ENCODE measurements at regions of chr5 and their contacts with region 1.

Region 1: DNA sequence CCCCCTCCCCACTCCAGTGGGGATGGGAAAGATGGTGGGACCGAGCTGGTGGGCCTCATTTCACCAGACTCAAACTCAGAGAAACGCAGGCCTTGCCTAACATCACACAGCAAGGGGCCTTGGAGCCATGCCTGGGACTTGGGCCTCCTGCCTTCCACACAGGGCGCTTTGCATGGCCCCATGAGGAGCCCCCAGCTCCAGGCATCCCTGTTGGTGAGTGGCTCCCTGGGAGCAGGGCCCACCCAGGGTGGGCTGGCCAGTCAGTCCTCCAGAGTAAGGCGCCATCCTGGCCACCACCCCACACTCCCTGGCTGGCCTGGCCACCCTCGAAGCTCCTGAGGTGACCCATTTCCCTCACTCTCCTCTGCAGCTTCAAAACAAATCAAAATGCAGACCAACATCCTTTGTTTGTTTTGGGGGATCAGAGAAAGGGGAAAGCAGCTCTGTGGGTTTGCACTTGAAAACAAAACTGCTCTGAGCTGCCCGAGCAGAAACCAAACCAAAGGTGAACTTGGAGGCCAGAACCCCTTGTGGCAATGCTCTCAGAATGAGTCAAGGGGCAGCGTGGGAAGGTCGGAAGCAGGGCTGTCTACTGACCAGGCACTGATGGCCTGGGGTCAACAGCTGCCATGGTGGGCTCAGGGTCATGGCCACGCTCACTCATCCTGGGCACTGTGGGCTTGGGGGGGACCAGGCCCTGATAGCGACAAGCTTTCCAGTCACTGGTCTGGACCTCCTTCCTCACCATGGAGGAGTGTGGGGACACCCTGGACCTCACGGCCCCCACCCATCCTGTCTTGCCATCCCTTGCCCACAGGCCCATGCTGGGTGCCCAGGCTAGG is 37.0 kb upstream of the VDAC1 start:
- DNase-seq: no peak
- ATAC-seq: no peak; the same call in 2 of the 3 replicates
- H3K4me3 ChIP-seq: peak overlapping the region in 1 of 3 experiments; percentile 14; a peak in 1 of 6 replicates
- H3K27ac ChIP-seq: no peak overlapping the region
- H3K4me1 ChIP-seq: peaks cover 62% of the 10 kb centered on the region
- H3K27me3 ChIP-seq: no peaks in the 10 kb centered on the region
- CTCF ChIP-seq: no peak
- EP300 ChIP-seq: no peak
- POLR2A ChIP-seq: no peak
- RAD21 ChIP-seq: no peak

Region 2: DNA sequence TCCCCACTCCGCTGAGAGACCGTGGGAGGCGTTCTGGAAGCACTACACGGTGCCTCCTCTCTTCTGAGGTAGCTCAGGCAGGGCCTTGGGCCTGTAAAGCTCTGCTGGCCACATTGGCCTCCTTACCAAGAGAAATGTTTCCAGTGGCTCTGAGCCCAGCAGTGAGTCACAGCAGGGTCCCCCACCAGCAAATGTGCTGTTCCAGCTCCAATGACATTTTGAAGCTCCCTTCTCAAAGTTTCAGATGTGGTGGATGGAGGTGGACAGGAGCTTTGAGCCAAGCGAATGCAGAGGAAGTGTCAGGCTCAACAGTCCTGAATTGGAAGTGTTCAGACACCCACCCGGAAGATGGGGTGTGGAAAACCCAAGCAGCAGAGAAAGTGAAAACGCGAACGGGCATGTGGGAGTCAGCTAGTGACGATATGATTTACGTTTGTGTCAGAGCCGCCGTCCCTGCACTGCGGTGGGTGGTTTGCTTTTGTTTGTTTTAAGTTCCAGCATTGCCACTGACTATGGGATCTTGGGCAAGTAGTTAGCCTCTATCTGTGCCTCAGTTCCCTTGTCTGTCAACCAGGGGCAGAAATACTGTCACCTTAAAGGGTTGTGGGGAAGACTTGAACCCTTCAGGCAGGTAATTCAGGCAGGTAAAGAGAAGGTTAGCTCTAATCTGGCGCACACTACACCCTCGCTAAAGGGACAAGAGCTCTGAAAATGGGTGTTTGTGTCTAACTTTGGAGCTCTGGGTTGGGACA is 111.6 kb before region 1 on chr5:
- CTCF ChIA-PET with region 1: no interaction called
- POLR2A ChIA-PET with region 1: no interaction called
- in situ Hi-C with region 1: no loop called
- intact Hi-C with region 1: no loop called
- DNase-seq: no peak
- ATAC-seq: no peak
- H3K4me3 ChIP-seq: no peak overlapping the region
- H3K27ac ChIP-seq: no peak overlapping the region
- H3K4me1 ChIP-seq: peaks cover 13% of the 10 kb centered on the region; the same call in 1 of the 2 replicates
- H3K27me3 ChIP-seq: peaks cover 8 to 69% of the 10 kb centered on the region in 2 experiments; a peak in 4 of 5 replicates
- CTCF ChIP-seq: no peak
- EP300 ChIP-seq: no peak
- POLR2A ChIP-seq: no peak
- RAD21 ChIP-seq: no peak

Region 3: GRCh38 chr5:134004592-134005375 is 37.0 kb before region 1 on chr5 and contains the start of gene VDAC1:
- CTCF ChIA-PET with region 1: no interaction called
- POLR2A ChIA-PET with region 1: interaction called, 11 read pairs
- in situ Hi-C with region 1: no loop called
- intact Hi-C with region 1: loop called (anchors 2 kb)
- DNase-seq: no peak
- ATAC-seq: peak; percentile 84
- H3K4me3 ChIP-seq: peak within 1 kb of the TSS; percentile 92 to 96 (median 96)
- H3K27ac ChIP-seq: peak within 1 kb of the TSS; percentile 95
- H3K4me1 ChIP-seq: peaks cover 51% of the 10 kb centered on the region
- H3K27me3 ChIP-seq: no peaks in the 10 kb centered on the region; a peak in 1 of 5 replicates
- CTCF ChIP-seq: peak; percentile 21; the same call in 1 of the 2 replicates
- EP300 ChIP-seq: no peak; a peak in 1 of 4 replicates
- POLR2A ChIP-seq: peak in 1 of 2 experiments; percentile 68; a peak in 1 of 4 replicates
- RAD21 ChIP-seq: no peak; the same call in 1 of the 2 replicates
- total RNA-seq, gene VDAC1: 380 and 481 TPM in 2 replicates

Region 4: GRCh38 chr5:134026521-134027268 is 15.1 kb before region 1 on chr5:
- CTCF ChIA-PET with region 1: interaction called, 47 read pairs
- POLR2A ChIA-PET with region 1: interaction called, 11 read pairs
- in situ Hi-C with region 1: no loop called
- intact Hi-C with region 1: loop called (anchors 1 kb)
- DNase-seq: peak; percentile 75
- ATAC-seq: peak; percentile 99
- H3K4me3 ChIP-seq: no peak overlapping the region
- H3K27ac ChIP-seq: no peak overlapping the region
- H3K4me1 ChIP-seq: peaks cover 15% of the 10 kb centered on the region
- H3K27me3 ChIP-seq: no peaks in the 10 kb centered on the region
- CTCF ChIP-seq: peak; percentile 93
- EP300 ChIP-seq: no peak
- POLR2A ChIP-seq: no peak
- RAD21 ChIP-seq: peak; percentile 79

Region 5: DNA sequence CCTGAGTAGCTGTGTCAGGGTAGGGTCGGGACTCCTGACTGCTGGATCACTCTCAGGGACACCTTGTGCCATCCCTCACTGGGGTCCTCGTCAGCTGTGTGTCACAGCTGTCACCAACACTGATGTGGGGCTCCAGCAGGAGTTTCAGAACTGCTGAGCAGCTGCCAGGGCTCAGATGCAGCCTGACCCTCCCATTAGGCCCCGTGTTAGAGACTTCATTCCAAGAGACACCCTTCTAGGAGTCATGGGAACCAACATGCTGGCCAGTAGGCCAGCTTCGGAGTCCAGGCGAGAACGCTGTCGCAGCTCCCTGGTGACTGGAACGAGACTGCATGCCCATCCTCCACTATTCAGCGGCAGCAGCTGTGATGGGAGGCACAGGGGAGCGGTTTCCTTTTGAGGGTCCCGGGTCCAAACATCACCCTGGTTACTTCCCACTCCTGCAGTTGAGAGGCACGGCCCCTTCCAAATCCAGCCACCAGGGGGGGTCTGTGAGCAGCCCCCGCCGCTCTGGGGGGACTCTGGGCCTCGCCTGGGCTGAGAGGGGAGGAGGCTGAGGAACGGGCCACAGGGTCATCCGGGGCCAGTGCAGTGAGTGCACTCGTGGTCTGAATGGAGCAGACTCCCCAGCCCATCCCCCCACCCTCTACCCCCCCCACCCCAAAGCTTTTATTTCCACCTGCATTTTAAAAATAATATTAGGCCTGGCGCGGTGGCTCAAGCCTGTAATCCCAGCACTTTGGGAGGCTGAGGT is 60.1 kb after region 1 on chr5:
- CTCF ChIA-PET with region 1: interaction called, 12 read pairs
- POLR2A ChIA-PET with region 1: interaction called, 29 read pairs
- in situ Hi-C with region 1: loop called (anchors 5 kb)
- intact Hi-C with region 1: loop called (anchors 2 kb)
- DNase-seq: peak; percentile 58
- ATAC-seq: peak; percentile 49
- H3K4me3 ChIP-seq: no peak overlapping the region
- H3K27ac ChIP-seq: no peak overlapping the region
- H3K4me1 ChIP-seq: peaks cover 98% of the 10 kb centered on the region
- H3K27me3 ChIP-seq: peaks cover 0 to 2% of the 10 kb centered on the region in 2 experiments; a peak in 1 of 5 replicates
- CTCF ChIP-seq: peak; percentile 87
- EP300 ChIP-seq: no peak
- POLR2A ChIP-seq: no peak
- RAD21 ChIP-seq: peak; percentile 80

Region 6: GRCh38 chr5:134145779-134146581 is 104.2 kb after region 1 on chr5:
- CTCF ChIA-PET with region 1: interaction called, 71 read pairs
- POLR2A ChIA-PET with region 1: interaction called, 4 read pairs
- in situ Hi-C with region 1: no loop called
- intact Hi-C with region 1: loop called (anchors 1 kb)
- DNase-seq: peak; percentile 62
- ATAC-seq: peak; percentile 80
- H3K4me3 ChIP-seq: no peak overlapping the region
- H3K27ac ChIP-seq: no peak overlapping the region
- H3K4me1 ChIP-seq: peaks cover 48% of the 10 kb centered on the region
- H3K27me3 ChIP-seq: no peaks in the 10 kb centered on the region
- CTCF ChIP-seq: peak; percentile 94
- EP300 ChIP-seq: no peak
- POLR2A ChIP-seq: no peak
- RAD21 ChIP-seq: peak; percentile 63

Region 7: GRCh38 chr5:134267366-134268018 is 225.7 kb after region 1 on chr5:
- CTCF ChIA-PET with region 1: no interaction called
- POLR2A ChIA-PET with region 1: no interaction called
- in situ Hi-C with region 1: no loop called
- intact Hi-C with region 1: no loop called
- DNase-seq: no peak
- ATAC-seq: no peak
- H3K4me3 ChIP-seq: no peak overlapping the region
- H3K27ac ChIP-seq: no peak overlapping the region
- H3K4me1 ChIP-seq: no peaks in the 10 kb centered on the region
- H3K27me3 ChIP-seq: no peaks in the 10 kb centered on the region
- CTCF ChIP-seq: no peak
- EP300 ChIP-seq: no peak
- POLR2A ChIP-seq: no peak
- RAD21 ChIP-seq: no peak

Measured in HepG2 (cell line).